ENCODE measurements at regions of chr15 and their contacts with region 1.

Region 1: GRCh38 chr15:74937596-74938296 is at the start of gene COX5A:
- DNase-seq: peak; percentile 96
- ATAC-seq: peak; percentile 96
- H3K4me3 Mint-ChIP-seq: peak within 1 kb of the TSS; percentile 88
- H3K27ac Mint-ChIP-seq: peak within 1 kb of the TSS; percentile 91
- H3K4me1 Mint-ChIP-seq: peaks cover 31% of the 10 kb centered on the region
- H3K27me3 Mint-ChIP-seq: no peaks in the 10 kb centered on the region
- total RNA-seq, gene COX5A: 313 to 319 TPM

Region 2: GRCh38 chr15:74695597-74696397 is 241.9 kb before region 1 on chr15 and contains the start of gene EDC3:
- CTCF ChIA-PET with region 1: no interaction called
- POLR2A ChIA-PET with region 1: no interaction called
- intact Hi-C with region 1: loop called in 1 of 2 experiments (anchors 1 kb)
- DNase-seq: peak; percentile 92
- ATAC-seq: peak; percentile 91
- H3K4me3 Mint-ChIP-seq: peak within 1 kb of the TSS; percentile 98
- H3K27ac Mint-ChIP-seq: peak within 1 kb of the TSS; percentile 99
- H3K4me1 Mint-ChIP-seq: peaks cover 27% of the 10 kb centered on the region
- H3K27me3 Mint-ChIP-seq: no peaks in the 10 kb centered on the region
- total RNA-seq, gene EDC3: 44.7 to 45.0 TPM

Region 3: GRCh38 chr15:74873036-74873755 is 64.5 kb before region 1 on chr15 and contains the start of gene SCAMP2:
- CTCF ChIA-PET with region 1: interaction called, 4 read pairs
- POLR2A ChIA-PET with region 1: no interaction called
- intact Hi-C with region 1: loop called (anchors 1 to 10 kb)
- DNase-seq: peak; percentile 94
- ATAC-seq: peak; percentile 84
- H3K4me3 Mint-ChIP-seq: peak within 1 kb of the TSS; percentile 87
- H3K27ac Mint-ChIP-seq: peak within 1 kb of the TSS; percentile 87
- H3K4me1 Mint-ChIP-seq: peaks cover 48% of the 10 kb centered on the region
- H3K27me3 Mint-ChIP-seq: no peaks in the 10 kb centered on the region
- total RNA-seq, gene SCAMP2: 61.6 to 83.4 TPM

Region 4: DNA sequence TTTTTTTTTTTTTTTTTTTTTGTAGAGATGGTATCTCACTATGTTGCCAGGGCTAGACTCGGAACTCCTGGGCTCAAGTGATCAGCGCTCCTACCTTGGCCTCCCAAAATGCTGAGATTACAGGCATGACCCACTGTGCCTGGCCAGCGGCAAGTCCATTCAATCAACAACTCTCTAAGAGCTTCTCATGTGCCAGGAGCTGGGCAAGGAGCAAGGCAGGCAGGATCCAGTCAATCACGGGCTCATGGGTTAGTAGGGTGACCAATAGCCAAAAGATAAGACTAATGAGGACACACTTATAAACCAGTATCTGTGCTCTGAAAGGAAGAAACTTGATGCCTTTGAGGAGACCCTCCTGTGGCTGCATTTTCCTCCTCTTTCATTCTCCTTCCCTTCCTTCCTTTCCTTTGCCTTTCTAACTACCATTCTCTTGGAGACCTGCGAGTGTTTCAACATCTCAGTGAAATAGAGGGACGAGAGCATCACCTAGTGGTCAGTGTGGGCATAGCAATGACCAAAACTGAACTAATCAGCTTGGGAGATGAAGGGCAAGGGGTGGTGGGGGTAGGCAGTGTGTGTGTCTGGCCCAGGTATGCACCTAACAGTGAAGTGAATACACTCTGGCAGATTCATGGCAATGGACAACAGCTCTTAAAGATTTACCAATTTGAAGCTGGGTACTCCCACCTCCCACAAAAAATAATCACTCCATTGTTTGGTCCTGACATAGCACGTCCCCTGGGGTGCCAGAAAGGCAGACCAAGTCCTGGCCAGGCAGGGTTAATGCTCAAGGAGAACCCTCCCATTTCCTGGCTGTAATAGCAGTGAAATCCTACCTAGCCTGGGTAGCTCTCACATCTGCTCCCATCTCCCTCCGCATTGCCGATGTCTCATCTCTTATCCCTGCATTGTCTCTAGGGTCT is 12.6 kb after region 1 on chr15:
- CTCF ChIA-PET with region 1: interaction called, 14 read pairs
- POLR2A ChIA-PET with region 1: no interaction called
- intact Hi-C with region 1: no loop called
- DNase-seq: peak; percentile 87
- ATAC-seq: peak; percentile 87
- H3K4me3 Mint-ChIP-seq: no peak overlapping the region
- H3K27ac Mint-ChIP-seq: no peak overlapping the region
- H3K4me1 Mint-ChIP-seq: peaks cover 7% of the 10 kb centered on the region
- H3K27me3 Mint-ChIP-seq: no peaks in the 10 kb centered on the region

Region 5: DNA sequence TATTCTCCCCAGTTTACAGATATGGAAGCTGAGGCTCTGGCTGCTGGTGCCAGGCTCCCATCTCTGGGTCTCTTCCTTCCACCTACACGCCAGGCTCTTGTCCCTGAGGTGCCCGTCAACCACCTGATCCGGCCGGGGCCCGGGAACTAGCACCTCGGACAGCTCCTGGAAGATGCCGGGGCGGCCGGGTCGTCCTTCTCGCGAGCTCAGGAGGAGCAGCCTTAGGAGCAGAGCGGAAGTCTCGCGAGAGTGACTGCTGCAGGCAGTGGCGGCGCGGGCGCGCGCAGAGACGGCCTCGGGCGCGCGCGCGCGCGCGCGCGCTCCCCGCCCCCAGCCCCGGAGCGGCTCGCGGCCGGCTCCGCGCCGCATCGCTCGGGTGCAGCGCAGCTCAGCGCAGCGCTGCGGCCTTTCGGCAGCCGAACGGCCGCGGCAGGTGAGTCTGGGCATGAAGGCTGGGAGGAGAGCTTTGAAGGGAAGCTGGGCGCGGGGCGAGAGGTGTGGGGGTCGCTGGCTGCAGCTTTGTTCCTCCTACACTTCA is 57.6 kb after region 1 on chr15 and contains the start of gene SCAMP5:
- CTCF ChIA-PET with region 1: no interaction called
- POLR2A ChIA-PET with region 1: no interaction called
- intact Hi-C with region 1: loop called in 1 of 2 experiments (anchors 1 kb)
- DNase-seq: peak; percentile 98
- ATAC-seq: peak; percentile 98
- H3K4me3 Mint-ChIP-seq: peak within 1 kb of the TSS; percentile 69
- H3K27ac Mint-ChIP-seq: no peak within 1 kb of the TSS
- H3K4me1 Mint-ChIP-seq: peaks cover 16% of the 10 kb centered on the region
- H3K27me3 Mint-ChIP-seq: peaks cover 8% of the 10 kb centered on the region
- total RNA-seq, gene SCAMP5: 3.9 to 4.5 TPM

Region 6: GRCh38 chr15:75639709-75640482 is 702.1 kb after region 1 on chr15 and contains the start of gene IMP3:
- CTCF ChIA-PET with region 1: no interaction called
- POLR2A ChIA-PET with region 1: no interaction called
- intact Hi-C with region 1: loop called in 1 of 2 experiments (anchors 5 kb)
- DNase-seq: peak; percentile 96
- ATAC-seq: peak; percentile 92
- H3K4me3 Mint-ChIP-seq: peak within 1 kb of the TSS; percentile 99
- H3K27ac Mint-ChIP-seq: peak within 1 kb of the TSS; percentile 96
- H3K4me1 Mint-ChIP-seq: peaks cover 25% of the 10 kb centered on the region
- H3K27me3 Mint-ChIP-seq: no peaks in the 10 kb centered on the region
- total RNA-seq, gene IMP3: 80.3 to 87.5 TPM

Measured in activated CD4-positive, alpha-beta T cell treated with anti-CD3 and anti-CD28 coated beads for 36 hours (primary cell).